HepG2 (cell line): ENCODE measurements at regions of chr20 and their contacts with region 1.

Region 1: GRCh38 chr20:49676581-49677291 is 36.9 kb downstream of the B4GALT5 start:
- DNase-seq: peak; percentile 50
- ATAC-seq: no peak
- H3K4me3 ChIP-seq: peak overlapping the region in 1 of 3 experiments; percentile 6; a peak in 1 of 6 replicates
- H3K27ac ChIP-seq: peak overlapping the region; percentile 93
- H3K4me1 ChIP-seq: peaks cover 96% of the 10 kb centered on the region
- H3K27me3 ChIP-seq: no peaks in the 10 kb centered on the region
- CTCF ChIP-seq: no peak
- EP300 ChIP-seq: 0 out of 4 replicates have a peak, but pooled peaks of 1 of the 2 experiments have one; percentile 21
- POLR2A ChIP-seq: no peak
- RAD21 ChIP-seq: no peak

Region 2: DNA sequence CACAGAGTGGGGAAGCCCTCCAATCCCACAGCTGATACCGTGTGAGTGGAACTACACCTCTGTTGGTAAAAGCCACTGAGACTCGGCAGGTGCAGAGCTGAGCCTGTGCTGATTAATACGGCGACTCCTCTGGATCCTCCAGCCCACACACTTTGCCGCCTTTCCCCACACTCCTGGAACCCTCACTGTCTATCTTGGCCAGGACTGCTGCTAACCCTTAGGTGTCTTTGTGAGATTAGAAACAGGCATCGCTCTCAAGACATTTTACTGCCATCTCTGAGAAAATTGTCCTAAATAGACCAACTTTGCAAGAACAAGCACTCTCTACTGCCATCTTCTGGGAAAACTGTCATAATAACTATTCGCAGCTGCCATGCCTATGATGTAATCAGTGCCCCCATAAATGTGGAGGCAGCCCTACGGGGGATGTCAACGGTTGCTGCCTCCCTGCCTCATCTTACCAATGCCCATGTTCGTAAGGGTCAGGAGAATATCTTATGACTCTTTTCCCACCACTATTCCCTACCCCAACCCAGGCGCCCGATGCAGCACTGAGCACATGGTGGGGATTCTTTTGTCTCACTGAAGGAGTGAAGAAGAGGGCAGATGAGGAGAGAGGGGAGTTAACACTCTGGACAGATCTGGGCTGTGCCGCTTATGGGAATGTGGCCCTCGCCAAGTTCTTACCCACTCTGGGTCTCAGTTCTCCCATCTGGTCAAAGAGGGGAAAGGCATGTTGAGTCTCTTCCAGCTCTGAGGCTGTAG is 168.1 kb before region 1 on chr20:
- CTCF ChIA-PET with region 1: no interaction called
- POLR2A ChIA-PET with region 1: no interaction called
- in situ Hi-C with region 1: no loop called
- intact Hi-C with region 1: no loop called
- DNase-seq: peak; percentile 56
- ATAC-seq: peak; percentile 60
- H3K4me3 ChIP-seq: no peak overlapping the region
- H3K27ac ChIP-seq: no peak overlapping the region
- H3K4me1 ChIP-seq: no peaks in the 10 kb centered on the region
- H3K27me3 ChIP-seq: peaks cover 1 to 40% of the 10 kb centered on the region in 2 experiments; a peak in 3 of 5 replicates
- CTCF ChIP-seq: peak; percentile 84
- EP300 ChIP-seq: no peak
- POLR2A ChIP-seq: no peak
- RAD21 ChIP-seq: peak; percentile 62

Region 3: DNA sequence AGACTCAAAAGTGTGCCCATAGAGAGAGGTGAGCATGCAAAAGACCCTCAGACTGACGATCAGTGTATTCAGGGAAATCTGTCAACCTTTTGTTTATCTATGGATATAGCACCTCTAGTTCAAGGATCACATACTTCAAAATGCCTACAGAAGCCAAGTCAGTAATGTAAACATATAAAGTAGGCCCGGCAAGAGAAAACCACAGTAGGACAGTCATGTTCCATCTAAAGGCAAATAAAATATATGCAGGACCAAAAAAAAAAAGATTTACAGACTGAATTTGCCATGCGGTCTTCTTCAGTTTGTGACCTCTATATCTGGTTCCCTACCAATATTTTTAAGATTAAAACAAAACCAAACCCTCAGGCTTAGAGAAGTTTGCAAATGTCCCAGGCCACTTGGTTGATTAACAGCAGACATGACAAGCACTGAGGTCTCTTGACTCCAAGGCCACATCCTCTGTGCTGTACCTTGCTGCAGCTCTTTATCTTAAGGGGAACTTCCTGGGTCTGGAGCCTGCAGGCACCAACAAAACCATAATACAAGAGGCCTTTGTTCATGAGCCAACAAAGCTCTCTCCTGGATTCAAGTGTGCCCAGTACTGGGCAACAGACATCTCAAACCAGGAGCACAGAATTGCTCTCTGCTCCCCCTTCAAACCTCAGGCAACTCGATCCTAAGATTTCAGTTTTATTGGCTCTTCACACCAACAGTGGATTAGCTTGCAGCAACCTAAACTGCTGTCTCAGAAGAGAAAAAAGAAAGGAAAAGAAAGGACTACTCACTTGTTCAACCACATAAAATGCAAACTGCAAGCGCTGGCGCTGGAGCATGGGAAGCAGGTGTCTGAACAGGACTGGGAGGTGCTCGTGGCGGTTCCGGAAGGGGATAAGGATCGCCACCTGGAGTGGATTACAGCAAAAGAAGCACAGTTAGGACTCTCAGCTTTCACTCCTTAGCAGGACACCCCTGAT is 34.8 kb before region 1 on chr20:
- CTCF ChIA-PET with region 1: no interaction called
- POLR2A ChIA-PET with region 1: interaction called, 10 read pairs
- in situ Hi-C with region 1: no loop called
- intact Hi-C with region 1: loop called (anchors 1 kb)
- DNase-seq: peak; percentile 93
- ATAC-seq: peak; percentile 83
- H3K4me3 ChIP-seq: peak overlapping the region in 1 of 3 experiments; percentile 14; a peak in 2 of 6 replicates
- H3K27ac ChIP-seq: peak overlapping the region; percentile 76
- H3K4me1 ChIP-seq: peaks cover 42% of the 10 kb centered on the region
- H3K27me3 ChIP-seq: no peaks in the 10 kb centered on the region
- CTCF ChIP-seq: 0 out of 2 replicates have a peak, but pooled peaks have one; percentile 1
- EP300 ChIP-seq: peak in 1 of 2 experiments; percentile 52; a peak in 2 of 4 replicates
- POLR2A ChIP-seq: no peak
- RAD21 ChIP-seq: no peak

Region 4: GRCh38 chr20:49690899-49691620 is 14.3 kb after region 1 on chr20:
- CTCF ChIA-PET with region 1: no interaction called
- POLR2A ChIA-PET with region 1: interaction called, 35 read pairs
- in situ Hi-C with region 1: no loop called
- intact Hi-C with region 1: loop called (anchors 2 kb)
- DNase-seq: peak; percentile 96
- ATAC-seq: peak; percentile 91
- H3K4me3 ChIP-seq: peak overlapping the region; percentile 35 to 55 (median 36)
- H3K27ac ChIP-seq: peak overlapping the region; percentile 82
- H3K4me1 ChIP-seq: peaks cover 99% of the 10 kb centered on the region
- H3K27me3 ChIP-seq: no peaks in the 10 kb centered on the region
- CTCF ChIP-seq: peak; percentile 17; the same call in 1 of the 2 replicates
- EP300 ChIP-seq: peak; percentile 84 to 90
- POLR2A ChIP-seq: peak in 1 of 2 experiments; percentile 37; a peak in 1 of 4 replicates
- RAD21 ChIP-seq: peak; percentile 45